Endothelial cell of umbilical vein (primary cell): ENCODE measurements at regions of chr11 and their contacts with region 1.

Region 1: DNA sequence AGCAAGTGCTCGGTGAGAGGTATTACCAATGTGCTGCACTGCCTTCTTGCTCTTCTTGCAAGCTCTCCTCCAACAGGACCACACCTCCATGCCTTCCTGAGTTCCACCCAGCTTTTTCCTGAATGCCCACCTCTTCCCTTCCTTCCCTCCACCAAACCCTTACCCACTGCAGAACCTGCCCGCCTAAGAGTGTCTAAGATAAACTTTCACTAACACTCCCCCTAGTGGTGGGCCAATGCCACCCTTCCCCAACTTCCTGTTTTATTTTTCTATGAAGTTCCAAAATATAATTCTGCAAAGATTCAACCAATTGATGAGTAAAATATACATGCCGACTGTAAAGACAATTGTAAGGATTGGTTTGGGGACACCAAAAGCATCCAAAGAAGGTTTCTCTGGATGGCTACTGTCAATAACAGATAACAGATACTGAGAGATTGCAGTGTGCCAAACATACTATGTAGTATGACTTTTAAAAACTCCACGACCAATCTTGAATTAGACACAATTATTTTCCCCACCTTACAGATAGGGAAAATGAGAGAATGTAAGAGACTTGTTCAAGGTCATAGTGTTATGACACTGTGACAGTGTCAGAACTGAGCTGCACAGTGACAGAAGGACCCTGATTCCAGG is 38.6 kb upstream of the BMAL1 start:
- DNase-seq: peak; percentile 38
- H3K4me3 ChIP-seq: no peak overlapping the region
- H3K27ac ChIP-seq: no peak overlapping the region
- H3K4me1 ChIP-seq: no peaks in the 10 kb centered on the region
- H3K27me3 ChIP-seq: peaks cover 11 to 20% of the 10 kb centered on the region in 2 experiments
- CTCF ChIP-seq: peak; percentile 74 to 81
- POLR2A ChIP-seq: no peak

Region 2: DNA sequence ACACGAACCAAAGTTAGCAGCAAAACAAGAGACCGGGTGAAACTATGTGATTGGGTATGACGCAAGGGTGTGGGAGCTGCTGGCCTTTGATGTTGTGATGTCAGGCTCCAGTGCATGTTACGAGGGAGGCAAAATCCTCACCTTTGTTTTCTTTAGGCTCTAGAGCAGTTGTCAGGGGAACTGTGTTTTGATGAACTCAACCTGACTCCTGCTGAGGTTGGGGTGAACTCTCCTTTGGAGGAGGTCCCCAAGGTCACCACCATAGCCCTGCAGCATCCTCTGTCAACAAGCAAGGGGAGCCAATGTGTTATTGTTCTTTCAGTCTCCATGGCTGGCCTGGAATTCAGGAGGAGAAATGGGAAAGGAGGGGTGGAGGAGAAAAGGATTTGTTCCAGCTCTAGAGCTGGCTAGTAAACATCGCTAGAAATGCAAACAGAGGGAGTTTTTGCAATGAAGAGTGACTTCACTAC is 196.1 kb before region 1 on chr11:
- CTCF ChIA-PET with region 1: no interaction called
- POLR2A ChIA-PET with region 1: no interaction called
- dilution Hi-C with region 1: no loop called
- intact Hi-C with region 1: no loop called
- DNase-seq: no peak
- H3K4me3 ChIP-seq: no peak overlapping the region
- H3K27ac ChIP-seq: no peak overlapping the region
- H3K4me1 ChIP-seq: no peaks in the 10 kb centered on the region
- H3K27me3 ChIP-seq: peaks cover 13 to 40% of the 10 kb centered on the region in 2 experiments
- CTCF ChIP-seq: no peak
- POLR2A ChIP-seq: no peak

Region 3: GRCh38 chr11:13183094-13183825 is 55.7 kb before region 1 on chr11:
- CTCF ChIA-PET with region 1: interaction called, 4 read pairs
- POLR2A ChIA-PET with region 1: no interaction called
- dilution Hi-C with region 1: no loop called
- intact Hi-C with region 1: loop called (anchors 1 kb)
- DNase-seq: peak; percentile 56
- H3K4me3 ChIP-seq: no peak overlapping the region
- H3K27ac ChIP-seq: no peak overlapping the region
- H3K4me1 ChIP-seq: peaks cover 6% of the 10 kb centered on the region
- H3K27me3 ChIP-seq: peaks cover 8 to 12% of the 10 kb centered on the region in 2 experiments
- CTCF ChIP-seq: peak; percentile 34 to 46
- POLR2A ChIP-seq: no peak